Breast epithelium (tissue), 4 donors: ENCODE measurements at regions of chr5 and their contacts with region 1.

Region 1: GRCh38 chr5:121462441-121462840 is 389.2 kb upstream of the FTMT start:
- DNase-seq: no peak
- H3K4me3 ChIP-seq: no peak overlapping the region
- H3K27ac ChIP-seq: no peak overlapping the region
- H3K4me1 ChIP-seq: no peaks in the 10 kb centered on the region
- H3K27me3 ChIP-seq: no peaks in the 10 kb centered on the region
- CTCF ChIP-seq: no peak
- POLR2A ChIP-seq: no peak

Region 2: GRCh38 chr5:120368923-120369715 is 1093.3 kb before region 1 on chr5:
- intact Hi-C with region 1: no loop called
- DNase-seq: no peak
- H3K4me3 ChIP-seq: no peak overlapping the region
- H3K27ac ChIP-seq: no peak overlapping the region
- H3K4me1 ChIP-seq: no peaks in the 10 kb centered on the region
- H3K27me3 ChIP-seq: no peaks in the 10 kb centered on the region
- CTCF ChIP-seq: no peak
- POLR2A ChIP-seq: no peak

Region 3: GRCh38 chr5:120655828-120656435 is 806.5 kb before region 1 on chr5:
- intact Hi-C with region 1: loop called (anchors 10 kb)
- DNase-seq: no peak
- H3K4me3 ChIP-seq: no peak overlapping the region
- H3K27ac ChIP-seq: no peak overlapping the region
- H3K4me1 ChIP-seq: no peaks in the 10 kb centered on the region
- H3K27me3 ChIP-seq: no peaks in the 10 kb centered on the region
- CTCF ChIP-seq: peak in 1 of 3 donors; percentile 38
- POLR2A ChIP-seq: no peak